CD4-positive, alpha-beta memory T cell (primary cell): ENCODE measurements at regions of chr7 and their contacts with region 1.

Region 1: GRCh38 chr7:2314209-2314955 is at the start of gene SNX8:
- DNase-seq: peak; percentile 93 to 98 (median 95)
- H3K4me3 ChIP-seq: peak within 1 kb of the TSS; percentile 57 to 61
- H3K4me3 Mint-ChIP-seq: peak within 1 kb of the TSS; percentile 89 to 96 (median 93)
- H3K27ac ChIP-seq: peak within 1 kb of the TSS; percentile 32
- H3K27ac Mint-ChIP-seq: peak within 1 kb of the TSS; percentile 81 to 94 (median 90)
- H3K4me1 ChIP-seq: peaks cover 8% of the 10 kb centered on the region
- H3K4me1 Mint-ChIP-seq: peaks cover 6 to 20% (median 10%) of the 10 kb centered on the region in 4 donors
- H3K27me3 ChIP-seq: no peaks in the 10 kb centered on the region
- H3K27me3 Mint-ChIP-seq: no peaks in the 10 kb centered on the region
- total RNA-seq, gene SNX8: 6.9 to 9.9 TPM

Region 2: GRCh38 chr7:2241580-2242540 is 72.5 kb before region 1 on chr7 and contains the starts of genes MRM2 and NUDT1:
- CTCF ChIA-PET with region 1: no interaction called
- POLR2A ChIA-PET with region 1: interaction called, 5 read pairs
- intact Hi-C with region 1: loop called (anchors 1 kb)
- DNase-seq: peak; percentile 41 to 61 (median 43)
- H3K4me3 ChIP-seq: peak within 1 kb of the TSS; percentile 47 to 82
- H3K4me3 Mint-ChIP-seq: peak within 1 kb of the TSS; percentile 92 to 96 (median 93)
- H3K27ac ChIP-seq: peak within 1 kb of the TSS; percentile 72
- H3K27ac Mint-ChIP-seq: peak within 1 kb of the TSS; percentile 77 to 96 (median 94)
- H3K4me1 ChIP-seq: peaks cover 17% of the 10 kb centered on the region
- H3K4me1 Mint-ChIP-seq: peaks cover 4 to 27% (median 17%) of the 10 kb centered on the region in 4 donors
- H3K27me3 ChIP-seq: no peaks in the 10 kb centered on the region
- H3K27me3 Mint-ChIP-seq: no peaks in the 10 kb centered on the region
- total RNA-seq, gene MRM2: 17.4 to 18.1 TPM
- total RNA-seq, gene NUDT1: 20.9 to 21.3 TPM

Region 3: DNA sequence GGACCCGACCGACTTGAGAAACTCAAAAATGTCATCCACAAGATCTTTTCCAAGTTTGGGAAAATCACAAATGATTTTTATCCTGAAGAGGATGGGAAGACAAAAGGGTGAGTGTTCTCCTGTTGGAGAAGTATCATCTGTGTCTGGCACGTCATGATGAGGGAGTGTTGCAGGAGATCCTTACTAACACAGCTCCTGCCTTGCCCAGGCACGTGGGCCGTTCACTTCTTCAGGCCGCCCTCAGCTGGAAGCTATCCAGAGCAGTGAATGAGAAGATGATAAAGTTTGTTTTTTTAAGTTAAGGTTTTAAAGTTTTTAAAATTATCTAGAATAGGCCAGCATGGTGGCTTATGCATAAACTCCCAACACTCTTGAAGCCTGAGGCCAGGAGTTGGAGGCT is 46.4 kb after region 1 on chr7:
- CTCF ChIA-PET with region 1: no interaction called
- POLR2A ChIA-PET with region 1: no interaction called
- intact Hi-C with region 1: no loop called
- DNase-seq: no peak
- H3K4me3 ChIP-seq: no peak overlapping the region
- H3K4me3 Mint-ChIP-seq: no peak overlapping the region
- H3K27ac ChIP-seq: no peak overlapping the region
- H3K27ac Mint-ChIP-seq: peak overlapping the region in 1 of 7 donors; percentile 42
- H3K4me1 ChIP-seq: peaks cover 41% of the 10 kb centered on the region
- H3K4me1 Mint-ChIP-seq: peaks cover 29 to 49% (median 38%) of the 10 kb centered on the region in 4 donors
- H3K27me3 ChIP-seq: no peaks in the 10 kb centered on the region
- H3K27me3 Mint-ChIP-seq: no peaks in the 10 kb centered on the region

Region 4: DNA sequence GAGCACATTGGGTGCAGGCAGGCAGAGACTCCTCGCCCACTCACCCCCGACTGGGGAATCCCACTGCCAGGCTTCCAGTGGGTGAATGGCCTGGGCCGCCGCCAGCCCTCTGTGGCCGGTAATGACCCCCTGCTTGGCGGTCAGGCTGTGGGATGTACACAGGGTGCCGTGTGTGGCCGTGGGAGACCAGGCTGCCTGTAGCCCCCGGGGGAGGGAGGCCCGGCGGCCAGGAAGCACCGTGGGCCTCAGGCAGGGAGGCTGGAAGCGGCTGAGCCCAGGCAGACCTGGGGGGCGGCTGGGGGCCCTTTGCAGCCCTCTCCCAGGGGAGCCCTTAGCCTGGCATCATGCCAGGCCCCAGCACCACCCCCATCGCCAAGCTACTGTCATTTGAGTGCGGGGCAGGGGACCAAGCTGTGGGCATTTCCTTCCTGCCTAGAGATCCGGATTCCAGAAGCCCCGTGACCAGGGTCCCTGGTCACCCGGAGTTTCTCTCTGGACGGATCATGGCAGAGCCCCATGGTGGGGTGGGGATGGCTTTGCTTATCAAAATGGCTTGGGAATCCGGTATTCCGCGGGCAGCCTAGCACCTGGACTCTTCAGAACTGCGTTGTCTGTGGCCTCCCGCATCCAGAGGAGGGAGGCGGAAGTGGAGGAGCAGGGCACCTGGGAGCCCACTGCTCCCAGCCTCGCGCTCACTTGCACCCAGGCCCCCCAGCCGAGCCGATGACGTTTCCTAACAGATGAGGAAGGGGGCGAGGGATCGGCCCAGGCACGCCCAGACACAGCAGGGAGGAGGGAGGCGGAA is 318.6 kb after region 1 on chr7:
- CTCF ChIA-PET with region 1: no interaction called
- POLR2A ChIA-PET with region 1: no interaction called
- intact Hi-C with region 1: loop called (anchors 5 kb)
- DNase-seq: peak in 4 of 5 donors; percentile 15 to 19 (median 18)
- H3K4me3 ChIP-seq: peak overlapping the region; percentile 52 to 82
- H3K4me3 Mint-ChIP-seq: peak overlapping the region; percentile 81 to 89 (median 84)
- H3K27ac ChIP-seq: peak overlapping the region; percentile 63
- H3K27ac Mint-ChIP-seq: peak overlapping the region; percentile 44 to 82 (median 75)
- H3K4me1 ChIP-seq: peaks cover 27% of the 10 kb centered on the region
- H3K4me1 Mint-ChIP-seq: peaks cover 2 to 21% (median 15%) of the 10 kb centered on the region in 4 donors
- H3K27me3 ChIP-seq: no peaks in the 10 kb centered on the region
- H3K27me3 Mint-ChIP-seq: peaks cover 0 to under 1% of the 10 kb centered on the region in 2 donors